ENCODE measurements at regions of chr3 and their contacts with region 1.

Region 1: DNA sequence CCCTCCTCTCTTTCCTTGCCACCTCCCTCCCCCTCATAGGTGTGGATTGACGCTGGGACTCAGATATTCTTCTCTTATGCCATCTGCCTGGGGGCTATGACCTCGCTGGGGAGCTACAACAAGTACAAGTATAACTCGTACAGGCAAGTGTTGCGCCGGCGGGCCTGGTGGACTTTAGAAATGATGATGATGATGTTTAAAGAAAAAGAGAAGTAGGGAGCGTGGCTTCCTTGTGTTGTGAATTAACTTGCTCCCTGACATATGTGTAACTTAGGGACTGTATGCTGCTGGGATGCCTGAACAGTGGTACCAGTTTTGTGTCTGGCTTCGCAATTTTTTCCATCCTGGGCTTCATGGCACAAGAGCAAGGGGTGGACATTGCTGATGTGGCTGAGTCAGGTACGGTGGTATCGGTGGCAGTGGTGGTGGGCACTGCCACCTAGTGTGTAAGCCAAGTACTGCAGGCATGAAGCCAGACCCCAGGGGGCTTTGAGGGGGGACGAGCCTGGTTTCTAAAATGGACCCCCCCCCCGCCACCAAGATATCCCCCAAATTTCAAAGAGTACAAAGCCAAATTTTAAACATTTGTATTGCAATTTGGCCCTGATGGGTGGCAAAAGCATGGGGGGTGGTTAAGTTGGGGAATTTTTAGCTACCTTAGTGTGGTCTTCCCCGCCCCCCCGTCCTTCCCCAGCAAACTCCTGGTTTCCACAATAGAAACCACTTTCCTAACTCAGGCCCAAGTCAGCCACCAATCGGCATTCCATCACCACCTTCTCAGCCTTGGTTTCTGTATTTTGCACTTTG is 65.6 kb downstream of the SLC6A6 start:
- DNase-seq: peak; percentile 81
- H3K4me3 Mint-ChIP-seq: no peak overlapping the region
- H3K27ac Mint-ChIP-seq: no peak overlapping the region
- H3K4me1 Mint-ChIP-seq: peaks cover 7% of the 10 kb centered on the region
- H3K27me3 Mint-ChIP-seq: no peaks in the 10 kb centered on the region

Region 2: DNA sequence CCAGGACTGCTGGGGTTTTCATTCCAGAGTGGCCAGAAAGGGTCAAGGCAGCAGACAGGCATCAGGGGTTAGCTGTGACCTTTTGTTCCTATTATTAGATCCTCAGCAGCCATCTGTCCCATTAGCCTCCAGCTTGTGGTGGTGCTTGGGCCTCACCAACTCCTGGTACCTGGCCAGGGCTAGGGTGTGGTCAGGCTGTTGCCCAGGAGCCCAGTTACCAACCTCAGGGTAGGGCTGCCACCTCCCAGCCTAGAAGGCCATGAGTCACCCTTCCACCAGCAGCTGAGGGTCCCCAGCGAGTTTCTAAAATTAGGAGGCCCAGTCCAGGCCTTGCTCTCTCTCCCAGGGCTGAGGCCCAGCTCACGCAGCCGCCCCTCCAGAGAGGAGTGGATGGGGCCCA is 331.0 kb before region 1 on chr3:
- intact Hi-C with region 1: no loop called
- DNase-seq: no peak
- H3K4me3 Mint-ChIP-seq: no peak overlapping the region
- H3K27ac Mint-ChIP-seq: no peak overlapping the region
- H3K4me1 Mint-ChIP-seq: peaks cover 5% of the 10 kb centered on the region
- H3K27me3 Mint-ChIP-seq: no peaks in the 10 kb centered on the region

Region 3: GRCh38 chr3:14203521-14204079 is 264.4 kb before region 1 on chr3:
- intact Hi-C with region 1: loop called (anchors 1 kb)
- DNase-seq: peak; percentile 78
- H3K4me3 Mint-ChIP-seq: no peak overlapping the region
- H3K27ac Mint-ChIP-seq: no peak overlapping the region
- H3K4me1 Mint-ChIP-seq: peaks cover 3% of the 10 kb centered on the region
- H3K27me3 Mint-ChIP-seq: no peaks in the 10 kb centered on the region

Region 4: DNA sequence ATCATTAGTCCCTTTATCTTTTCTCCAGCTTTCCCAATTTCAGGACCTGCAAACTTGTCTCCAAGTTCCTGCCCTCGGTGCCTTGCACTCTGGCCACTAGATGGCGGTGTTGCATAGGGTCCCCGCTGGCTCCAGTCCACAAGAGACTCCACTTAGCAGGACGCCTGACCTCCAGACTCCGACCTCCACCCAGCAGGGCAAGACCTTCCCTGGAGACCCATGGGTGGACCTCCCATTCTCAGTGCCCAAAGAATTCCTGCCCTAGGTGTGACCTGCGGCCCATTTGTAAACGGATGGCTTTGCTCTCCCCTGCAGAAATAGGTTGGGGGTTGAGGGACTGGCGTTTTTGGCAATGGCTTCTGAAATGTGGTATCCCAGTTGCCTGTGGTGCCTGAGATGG is 206.8 kb before region 1 on chr3:
- intact Hi-C with region 1: loop called (anchors 1 kb)
- DNase-seq: peak; percentile 92
- H3K4me3 Mint-ChIP-seq: no peak overlapping the region
- H3K27ac Mint-ChIP-seq: no peak overlapping the region
- H3K4me1 Mint-ChIP-seq: no peaks in the 10 kb centered on the region
- H3K27me3 Mint-ChIP-seq: peaks cover 7% of the 10 kb centered on the region

Region 5: DNA sequence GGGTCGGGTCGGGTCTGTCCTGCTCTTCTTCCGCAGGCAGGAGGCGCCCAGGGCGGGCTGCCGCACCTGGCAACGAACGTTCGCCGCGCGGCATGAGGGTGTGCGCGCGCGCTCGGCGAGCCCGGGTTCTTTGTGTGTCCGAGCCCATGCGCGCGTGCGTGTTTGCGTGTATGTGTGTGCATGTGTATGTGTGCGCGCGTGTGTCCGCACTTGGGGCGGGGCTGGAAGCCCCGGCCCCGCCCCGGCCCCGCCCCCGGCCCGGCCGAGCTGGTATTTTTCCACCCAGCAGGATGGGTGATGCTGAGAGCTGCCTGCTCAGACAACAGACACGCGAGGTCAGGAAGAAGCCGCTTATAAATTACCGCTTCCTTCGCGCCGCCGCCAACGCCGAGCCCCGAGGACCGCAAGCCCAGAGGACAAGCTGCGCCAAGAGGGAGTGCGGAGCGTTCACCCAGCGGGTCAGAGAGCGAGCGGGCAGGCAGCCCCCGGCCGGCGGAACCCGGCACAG is 65.7 kb before region 1 on chr3 and contains the start of gene SLC6A6:
- intact Hi-C with region 1: loop called (anchors 1 kb)
- DNase-seq: peak; percentile 98
- H3K4me3 Mint-ChIP-seq: peak within 1 kb of the TSS; percentile 99
- H3K27ac Mint-ChIP-seq: peak within 1 kb of the TSS; percentile 97
- H3K4me1 Mint-ChIP-seq: peaks cover 43% of the 10 kb centered on the region
- H3K27me3 Mint-ChIP-seq: no peaks in the 10 kb centered on the region
- total RNA-seq, gene SLC6A6: 53.9 and 63.7 TPM in 2 replicates